Tibial artery (tissue), 4 donors: ENCODE measurements at regions of chr14 and their contacts with region 1.

Region 1: GRCh38 chr14:50714450-50715073 is 46.5 kb upstream of the SAV1 start:
- DNase-seq: no peak
- H3K4me3 ChIP-seq: no peak overlapping the region
- H3K27ac ChIP-seq: no peak overlapping the region
- H3K4me1 ChIP-seq: no peaks in the 10 kb centered on the region
- H3K27me3 ChIP-seq: no peaks in the 10 kb centered on the region
- CTCF ChIP-seq: peak; percentile 47 to 64

Region 2: DNA sequence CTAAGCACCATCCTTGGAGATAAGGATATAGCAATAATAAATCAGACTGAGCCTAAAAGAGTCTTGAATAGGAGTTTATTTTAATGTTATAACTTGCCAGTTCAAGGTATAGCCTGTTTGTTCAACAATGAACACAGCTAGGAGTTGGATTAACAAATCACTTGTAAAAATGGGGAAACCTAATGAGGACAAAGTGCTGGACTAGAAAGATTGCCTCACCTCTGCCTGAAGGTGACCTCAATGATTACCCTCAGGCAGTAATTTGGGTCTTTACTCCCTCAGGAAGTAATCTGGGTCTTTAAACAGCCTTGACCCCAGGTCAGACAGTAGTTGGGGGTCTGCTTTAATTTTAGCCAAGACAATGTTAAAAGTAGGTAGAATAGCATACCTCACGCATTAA is 282.4 kb before region 1 on chr14:
- intact Hi-C with region 1: no loop called
- DNase-seq: no peak
- H3K4me3 ChIP-seq: no peak overlapping the region
- H3K27ac ChIP-seq: no peak overlapping the region
- H3K4me1 ChIP-seq: no peaks in the 10 kb centered on the region
- H3K27me3 ChIP-seq: no peaks in the 10 kb centered on the region
- CTCF ChIP-seq: no peak

Region 3: DNA sequence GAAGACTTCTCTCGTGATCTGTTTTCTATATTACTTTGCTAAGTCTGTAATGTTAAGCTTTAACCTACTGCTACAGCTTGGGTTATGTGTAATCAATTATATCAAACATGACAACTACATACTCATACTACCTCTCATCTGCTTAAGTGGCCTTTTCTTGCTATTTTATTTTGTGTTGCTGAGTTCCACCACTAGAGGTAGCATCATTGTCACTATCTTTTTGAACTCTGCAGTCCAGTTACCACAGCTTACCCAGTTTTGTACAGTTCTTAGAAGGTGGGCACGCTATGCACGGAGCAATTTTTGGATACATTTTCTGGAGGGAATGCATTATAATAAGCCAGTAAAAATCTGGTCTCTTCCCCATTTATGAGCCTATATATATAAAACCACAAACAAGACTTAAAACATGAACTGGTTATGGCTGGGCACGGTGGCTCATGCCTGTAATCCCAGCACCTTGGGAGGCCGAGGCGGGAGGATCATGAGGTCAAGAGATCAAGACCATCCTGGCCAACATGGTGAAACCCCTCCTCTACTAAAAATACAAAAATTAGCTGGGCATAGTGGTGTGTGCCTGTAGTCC is 94.9 kb before region 1 on chr14:
- intact Hi-C with region 1: loop called (anchors 5 kb)
- DNase-seq: no peak
- H3K4me3 ChIP-seq: no peak overlapping the region
- H3K27ac ChIP-seq: no peak overlapping the region
- H3K4me1 ChIP-seq: no peaks in the 10 kb centered on the region
- H3K27me3 ChIP-seq: no peaks in the 10 kb centered on the region
- CTCF ChIP-seq: peak; percentile 48 to 57

Region 4: GRCh38 chr14:50937325-50937724 is 222.8 kb after region 1 on chr14:
- intact Hi-C with region 1: no loop called
- DNase-seq: no peak
- H3K4me3 ChIP-seq: no peak overlapping the region
- H3K27ac ChIP-seq: no peak overlapping the region
- H3K4me1 ChIP-seq: no peaks in the 10 kb centered on the region
- H3K27me3 ChIP-seq: no peaks in the 10 kb centered on the region
- CTCF ChIP-seq: no peak